Right cardiac atrium (tissue), 5 donors: ENCODE measurements at regions of chr4 and their contacts with region 1.

Region 1: GRCh38 chr4:71184195-71184781 is 154.5 kb upstream of the SLC4A4 start:
- DNase-seq: peak in 2 of 3 donors; percentile 30 to 60
- ATAC-seq: no peak
- H3K4me3 ChIP-seq: no peak overlapping the region
- H3K27ac ChIP-seq: no peak overlapping the region
- H3K4me1 ChIP-seq: no peaks in the 10 kb centered on the region
- H3K27me3 ChIP-seq: no peaks in the 10 kb centered on the region

Region 2: DNA sequence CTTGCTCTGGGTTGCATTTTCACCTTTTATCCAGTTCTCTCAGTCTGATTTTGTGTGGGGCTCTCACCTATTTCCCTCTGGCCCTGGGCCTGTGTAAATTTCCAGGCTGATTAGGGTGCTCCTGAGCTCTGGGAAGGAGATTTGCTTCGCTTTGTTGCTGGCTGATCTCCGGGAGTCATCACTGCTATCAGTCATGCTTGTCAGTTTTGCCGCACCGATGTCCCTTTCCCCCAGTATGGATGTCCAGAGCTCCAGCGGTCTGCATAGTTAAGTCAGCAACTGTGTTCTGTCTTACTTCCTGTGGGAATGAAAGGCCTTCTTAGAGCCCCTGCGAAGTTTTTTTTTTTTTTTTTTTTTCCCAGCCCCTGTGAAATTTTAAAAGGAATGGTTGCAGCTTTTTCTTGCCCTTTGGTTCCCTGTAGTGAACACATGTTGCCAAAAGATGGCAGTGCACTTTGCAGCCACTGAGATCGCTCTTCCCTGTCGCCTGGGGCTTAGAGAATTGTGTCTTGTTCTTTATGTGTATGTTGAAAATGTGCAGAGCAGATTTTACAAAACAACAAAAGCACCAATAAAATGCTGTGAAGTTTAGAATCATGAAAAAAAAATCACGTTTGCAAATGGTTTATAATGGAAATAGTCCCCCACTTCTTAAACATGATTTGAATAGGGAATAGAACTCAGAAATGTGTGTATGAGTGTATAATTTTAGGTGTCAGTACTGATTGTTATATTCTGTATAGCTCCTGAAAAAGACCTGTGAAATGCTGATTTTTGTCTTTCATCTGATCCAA is 45.4 kb after region 1 on chr4:
- intact Hi-C with region 1: loop called in 1 of 4 experiments (anchors 5 kb)
- DNase-seq: peak in 2 of 3 donors; percentile 47 to 54
- ATAC-seq: peak; percentile 59 to 68
- H3K4me3 ChIP-seq: no peak overlapping the region
- H3K27ac ChIP-seq: peak overlapping the region; percentile 78
- H3K4me1 ChIP-seq: peaks cover 4% of the 10 kb centered on the region
- H3K27me3 ChIP-seq: no peaks in the 10 kb centered on the region

Region 3: GRCh38 chr4:71553605-71554004 is 369.3 kb after region 1 on chr4:
- intact Hi-C with region 1: loop called in 3 of 4 experiments (anchors 5 to 10 kb)
- DNase-seq: no peak
- ATAC-seq: peak; percentile 57 to 68
- H3K4me3 ChIP-seq: no peak overlapping the region
- H3K27ac ChIP-seq: no peak overlapping the region
- H3K4me1 ChIP-seq: no peaks in the 10 kb centered on the region
- H3K27me3 ChIP-seq: no peaks in the 10 kb centered on the region

Region 4: GRCh38 chr4:71570492-71570891 is 386.2 kb after region 1 on chr4:
- intact Hi-C with region 1: no loop called
- DNase-seq: no peak
- ATAC-seq: no peak
- H3K4me3 ChIP-seq: no peak overlapping the region
- H3K27ac ChIP-seq: no peak overlapping the region
- H3K4me1 ChIP-seq: no peaks in the 10 kb centered on the region
- H3K27me3 ChIP-seq: no peaks in the 10 kb centered on the region

Region 5: GRCh38 chr4:71713611-71714203 is 529.4 kb after region 1 on chr4:
- intact Hi-C with region 1: loop called in 1 of 4 experiments (anchors 10 kb)
- DNase-seq: no peak
- ATAC-seq: no peak
- H3K4me3 ChIP-seq: no peak overlapping the region
- H3K27ac ChIP-seq: no peak overlapping the region
- H3K4me1 ChIP-seq: no peaks in the 10 kb centered on the region
- H3K27me3 ChIP-seq: no peaks in the 10 kb centered on the region

Region 6: GRCh38 chr4:71958978-71959377 is 774.7 kb after region 1 on chr4:
- intact Hi-C with region 1: no loop called
- DNase-seq: no peak
- ATAC-seq: no peak
- H3K4me3 ChIP-seq: no peak overlapping the region
- H3K27ac ChIP-seq: no peak overlapping the region
- H3K4me1 ChIP-seq: no peaks in the 10 kb centered on the region
- H3K27me3 ChIP-seq: no peaks in the 10 kb centered on the region